Activated CD8-positive, alpha-beta T cell treated with anti-CD3 and anti-CD28 coated beads for 36 hours (primary cell): ENCODE measurements at regions of chr10 and their contacts with region 1.

Region 1: DNA sequence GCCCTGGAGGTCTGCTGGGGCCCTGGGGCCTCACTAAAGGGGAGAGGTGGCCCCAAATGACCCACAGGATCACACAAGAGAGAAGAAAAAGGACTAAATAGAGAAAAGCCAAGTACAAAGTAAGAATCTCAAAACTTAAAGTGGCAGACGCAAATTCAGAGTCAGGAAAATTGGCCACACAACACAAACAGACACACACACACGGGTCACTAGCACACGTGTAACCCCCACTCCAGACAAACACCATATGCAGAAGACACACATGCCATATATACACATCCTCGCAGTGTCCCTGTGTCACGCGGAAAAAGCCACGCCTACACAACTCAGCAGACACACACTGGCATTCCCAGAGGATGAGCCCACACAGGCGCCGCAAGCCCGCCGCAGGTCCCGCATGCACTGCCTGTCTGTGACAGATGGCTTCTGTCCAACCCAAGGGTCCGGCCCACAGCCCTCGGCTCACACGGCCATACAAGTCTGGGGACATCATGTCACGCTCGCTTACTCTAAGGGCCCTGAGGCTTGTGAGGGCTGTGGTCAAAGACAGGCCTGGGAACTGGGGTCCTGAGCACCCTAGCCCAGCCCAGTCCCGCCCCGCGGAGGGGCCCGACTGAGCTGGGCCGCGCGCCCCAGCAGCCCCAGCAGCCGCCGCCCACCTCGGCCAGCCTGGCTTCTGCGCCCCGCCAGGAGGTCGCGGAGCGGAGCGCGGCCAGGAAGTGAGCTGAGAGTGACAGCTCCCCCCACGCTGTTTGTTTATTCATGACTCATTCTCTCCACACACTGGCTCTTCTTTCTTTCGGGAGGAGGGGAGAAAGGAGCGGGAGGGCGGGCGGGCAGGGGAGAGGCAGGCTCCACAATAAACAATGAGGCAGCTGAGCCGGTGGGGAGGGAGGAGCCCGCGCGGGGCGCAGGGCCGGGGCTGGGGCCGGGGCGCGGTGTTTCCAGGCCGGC is 95.5 kb upstream of the ZMIZ1 start:
- DNase-seq: peak; percentile 88
- ATAC-seq: peak; percentile 71
- H3K4me3 Mint-ChIP-seq: peak overlapping the region; percentile 57
- H3K27ac Mint-ChIP-seq: peak overlapping the region; percentile 81
- H3K4me1 Mint-ChIP-seq: peaks cover 41% of the 10 kb centered on the region
- H3K27me3 Mint-ChIP-seq: no peaks in the 10 kb centered on the region
- CTCF ChIP-seq: no peak

Region 2: GRCh38 chr10:78985973-78986818 is 13.0 kb after region 1 on chr10:
- CTCF ChIA-PET with region 1: interaction called, 27 read pairs
- POLR2A ChIA-PET with region 1: interaction called, 5 read pairs
- intact Hi-C with region 1: no loop called
- DNase-seq: no peak
- ATAC-seq: no peak
- H3K4me3 Mint-ChIP-seq: no peak overlapping the region
- H3K27ac Mint-ChIP-seq: no peak overlapping the region
- H3K4me1 Mint-ChIP-seq: peaks cover 15% of the 10 kb centered on the region
- H3K27me3 Mint-ChIP-seq: no peaks in the 10 kb centered on the region
- CTCF ChIP-seq: no peak

Region 3: DNA sequence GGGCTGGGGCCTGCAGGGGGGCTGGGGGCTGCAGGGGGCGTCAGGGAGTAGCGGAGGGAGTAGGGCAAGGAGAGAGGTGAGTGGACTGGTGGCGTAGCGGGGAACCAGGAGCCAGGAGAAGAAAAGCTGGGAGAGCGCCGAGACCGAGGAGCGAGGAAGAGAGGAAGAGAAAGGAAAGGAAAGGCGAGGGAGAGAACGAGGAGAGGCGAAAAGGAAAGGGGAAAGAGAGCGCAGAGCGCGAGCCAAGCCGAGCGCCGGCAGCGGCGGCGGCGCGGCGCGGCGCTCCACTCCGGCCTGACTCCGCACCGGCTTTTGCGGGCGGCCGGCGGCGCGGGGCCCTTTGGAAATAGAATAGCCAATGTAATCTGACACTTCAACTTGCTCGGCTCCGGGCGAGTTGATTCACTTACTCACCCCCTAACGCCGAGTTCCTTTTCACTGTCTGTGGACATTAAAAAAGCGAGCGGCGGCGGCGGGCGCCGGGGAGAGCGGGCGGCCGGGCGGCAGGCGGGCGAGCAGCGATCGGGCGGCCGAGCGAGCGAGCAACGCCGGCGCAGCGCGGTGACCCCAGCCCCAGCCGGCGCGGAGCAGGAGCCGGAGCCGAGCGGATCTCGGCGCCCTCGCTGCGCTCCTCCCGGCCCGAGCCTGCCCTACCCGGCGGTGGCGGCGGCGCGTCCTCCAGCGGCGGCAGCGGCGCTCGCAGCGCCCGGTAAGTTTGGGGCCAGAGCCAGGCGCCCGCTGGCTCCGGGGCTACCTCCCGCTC is 95.5 kb after region 1 on chr10 and contains the start of gene ZMIZ1:
- CTCF ChIA-PET with region 1: no interaction called
- POLR2A ChIA-PET with region 1: interaction called, 6 read pairs
- intact Hi-C with region 1: loop called (anchors 5 kb)
- DNase-seq: peak; percentile 87
- ATAC-seq: peak; percentile 65
- H3K4me3 Mint-ChIP-seq: peak within 1 kb of the TSS; percentile 89
- H3K27ac Mint-ChIP-seq: peak within 1 kb of the TSS; percentile 86
- H3K4me1 Mint-ChIP-seq: peaks cover 33% of the 10 kb centered on the region
- H3K27me3 Mint-ChIP-seq: no peaks in the 10 kb centered on the region
- CTCF ChIP-seq: no peak
- total RNA-seq, gene ZMIZ1: 46.5 to 52.2 TPM

Region 4: GRCh38 chr10:79149662-79150443 is 176.6 kb after region 1 on chr10:
- CTCF ChIA-PET with region 1: no interaction called
- POLR2A ChIA-PET with region 1: no interaction called
- intact Hi-C with region 1: no loop called
- DNase-seq: peak; percentile 66
- ATAC-seq: peak; percentile 91
- H3K4me3 Mint-ChIP-seq: no peak overlapping the region
- H3K27ac Mint-ChIP-seq: peak overlapping the region; percentile 69
- H3K4me1 Mint-ChIP-seq: peaks cover 48% of the 10 kb centered on the region
- H3K27me3 Mint-ChIP-seq: no peaks in the 10 kb centered on the region
- CTCF ChIP-seq: no peak